Breast epithelium (tissue), 4 donors: ENCODE measurements at regions of chr1 and their contacts with region 1.

Region 1: DNA sequence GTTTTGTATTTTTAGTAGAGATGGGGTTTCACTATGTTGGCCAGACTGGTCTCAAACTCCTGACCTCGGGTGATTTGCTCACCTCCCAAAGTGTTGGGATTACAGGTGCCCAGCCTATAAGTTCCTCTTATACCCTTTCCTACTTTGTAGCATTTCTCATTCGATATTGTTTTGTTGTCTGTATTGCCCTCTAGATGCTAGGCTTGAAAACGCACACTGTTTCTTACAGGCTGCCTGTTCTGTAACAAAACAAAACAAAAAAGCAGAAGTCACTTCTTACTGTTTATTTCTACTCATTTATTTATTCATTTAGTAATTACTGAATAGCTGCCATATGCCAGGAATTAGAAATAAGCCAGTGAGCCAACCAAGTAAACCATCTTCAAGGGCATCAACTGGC is 136.9 kb upstream of the BMP8A start:
- DNase-seq: no peak
- H3K4me3 ChIP-seq: no peak overlapping the region
- H3K27ac ChIP-seq: no peak overlapping the region
- H3K4me1 ChIP-seq: peaks cover 0 to 8% of the 10 kb centered on the region in 2 donors
- H3K27me3 ChIP-seq: no peaks in the 10 kb centered on the region
- CTCF ChIP-seq: no peak
- POLR2A ChIP-seq: no peak

Region 2: GRCh38 chr1:39408641-39409054 is 54.1 kb after region 1 on chr1:
- intact Hi-C with region 1: loop called (anchors 2 kb)
- DNase-seq: peak; percentile 89 to 92
- H3K4me3 ChIP-seq: peak overlapping the region; percentile 84 to 91 (median 84)
- H3K27ac ChIP-seq: peak overlapping the region; percentile 91 to 95
- H3K4me1 ChIP-seq: peaks cover 0 to 15% of the 10 kb centered on the region in 2 donors
- H3K27me3 ChIP-seq: no peaks in the 10 kb centered on the region
- CTCF ChIP-seq: no peak
- POLR2A ChIP-seq: no peak